Sigmoid colon (tissue), 7 donors: ENCODE measurements at regions of chr5 and their contacts with region 1.

Region 1: DNA sequence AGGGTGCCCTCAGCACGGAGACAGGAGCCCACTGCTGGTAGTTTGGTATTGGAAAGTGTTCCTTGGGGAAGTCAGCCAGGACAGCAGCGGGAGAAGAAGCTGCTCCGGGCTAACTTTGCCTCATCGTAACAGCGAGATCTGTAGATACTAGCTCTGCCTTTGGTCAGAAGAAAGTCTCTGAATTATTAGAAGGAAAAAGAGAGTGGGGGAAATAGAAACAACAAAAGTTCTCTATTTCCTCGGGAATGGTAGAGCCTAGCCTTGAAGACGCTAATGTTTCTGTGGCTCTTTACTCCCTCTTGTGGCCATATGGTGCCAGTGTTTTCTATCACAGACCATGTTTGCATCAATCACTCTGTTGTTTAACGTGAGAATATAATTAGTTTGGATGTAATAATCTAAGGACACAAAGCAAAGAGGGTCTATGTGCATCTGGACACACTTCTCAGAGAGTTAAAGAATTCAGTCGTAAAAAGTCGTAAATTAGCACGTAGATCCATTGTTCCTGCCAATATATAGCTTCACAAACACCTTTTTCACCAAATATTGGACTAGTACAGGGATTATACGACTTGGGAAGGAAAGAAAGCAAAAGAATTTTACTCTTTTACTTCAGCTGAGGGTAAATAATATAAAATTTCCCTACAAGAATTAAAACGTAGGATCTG is 40.2 kb upstream of the HSD17B4 start:
- DNase-seq: peak; percentile 69
- H3K4me3 ChIP-seq: peak overlapping the region; percentile 15 to 51 (median 42)
- H3K27ac ChIP-seq: peak overlapping the region; percentile 61 to 71 (median 66)
- H3K4me1 ChIP-seq: peaks cover 0 to 13% (median 7%) of the 10 kb centered on the region in 4 donors
- H3K27me3 ChIP-seq: peaks cover 0 to 12% (median 0%) of the 10 kb centered on the region in 3 donors
- CTCF ChIP-seq: peak; percentile 87 to 94 (median 92)
- EP300 ChIP-seq: no peak
- POLR2A ChIP-seq: no peak

Region 2: GRCh38 chr5:118987988-118988865 is 423.8 kb before region 1 on chr5 and contains the start of gene DTWD2:
- intact Hi-C with region 1: loop called (anchors 1 kb)
- DNase-seq: peak; percentile 93
- H3K4me3 ChIP-seq: peak within 1 kb of the TSS; percentile 59 to 76 (median 66)
- H3K27ac ChIP-seq: peak within 1 kb of the TSS; percentile 86 to 95 (median 90)
- H3K4me1 ChIP-seq: peaks cover 0 to 16% (median 12%) of the 10 kb centered on the region in 4 donors
- H3K27me3 ChIP-seq: no peaks in the 10 kb centered on the region
- CTCF ChIP-seq: peak; percentile 74 to 94 (median 80)
- EP300 ChIP-seq: no peak
- POLR2A ChIP-seq: no peak
- total RNA-seq, gene DTWD2: 4.6 to 10.4 (median 7.9) TPM

Region 3: GRCh38 chr5:119070828-119071572 is 341.1 kb before region 1 on chr5 and contains the start of gene DMXL1:
- intact Hi-C with region 1: loop called (anchors 5 kb)
- DNase-seq: peak; percentile 100
- H3K4me3 ChIP-seq: peak within 1 kb of the TSS; percentile 83 to 95 (median 88)
- H3K27ac ChIP-seq: peak within 1 kb of the TSS; percentile 94 to 99 (median 97)
- H3K4me1 ChIP-seq: peaks cover 0 to 40% (median 21%) of the 10 kb centered on the region in 4 donors
- H3K27me3 ChIP-seq: no peaks in the 10 kb centered on the region
- CTCF ChIP-seq: no peak
- EP300 ChIP-seq: peak in 1 of 4 donors; percentile 47
- POLR2A ChIP-seq: peak; percentile 57 to 79
- total RNA-seq, gene DMXL1: 50.8 to 106 (median 66.9) TPM

Region 4: GRCh38 chr5:119238265-119239118 is 173.6 kb before region 1 on chr5:
- intact Hi-C with region 1: loop called (anchors 10 kb)
- DNase-seq: no peak
- H3K4me3 ChIP-seq: no peak overlapping the region
- H3K27ac ChIP-seq: no peak overlapping the region
- H3K4me1 ChIP-seq: no peaks in the 10 kb centered on the region
- H3K27me3 ChIP-seq: no peaks in the 10 kb centered on the region
- CTCF ChIP-seq: no peak
- EP300 ChIP-seq: no peak
- POLR2A ChIP-seq: no peak

Region 5: DNA sequence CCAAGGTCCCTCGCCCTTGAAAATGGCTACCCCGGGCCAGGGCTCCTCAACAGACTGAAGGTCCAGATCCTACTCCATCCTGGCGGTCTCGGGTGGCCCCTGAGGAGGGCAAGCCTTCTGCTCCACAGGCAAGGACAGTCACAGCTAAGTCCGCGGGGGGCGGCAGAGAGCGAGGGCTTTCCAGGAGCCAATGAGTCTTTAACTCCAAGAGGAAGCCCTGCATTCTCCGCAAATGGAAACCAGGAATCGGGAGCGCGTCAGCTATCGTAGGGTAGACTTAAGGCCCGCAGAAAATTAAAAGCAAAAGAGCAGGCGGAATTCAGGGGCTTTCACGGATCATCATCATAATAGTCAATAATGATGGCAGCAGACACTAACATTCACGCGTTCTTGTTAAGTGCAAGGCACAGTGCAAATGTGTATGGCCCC is 144.1 kb before region 1 on chr5:
- intact Hi-C with region 1: loop called (anchors 5 kb)
- DNase-seq: peak; percentile 97
- H3K4me3 ChIP-seq: peak overlapping the region; percentile 50 to 84 (median 78)
- H3K27ac ChIP-seq: peak overlapping the region; percentile 89 to 96 (median 92)
- H3K4me1 ChIP-seq: peaks cover 0 to 28% (median 15%) of the 10 kb centered on the region in 4 donors
- H3K27me3 ChIP-seq: no peaks in the 10 kb centered on the region
- CTCF ChIP-seq: peak in 3 of 4 experiments; percentile 15 to 31 (median 29)
- EP300 ChIP-seq: no peak
- POLR2A ChIP-seq: no peak

Region 6: DNA sequence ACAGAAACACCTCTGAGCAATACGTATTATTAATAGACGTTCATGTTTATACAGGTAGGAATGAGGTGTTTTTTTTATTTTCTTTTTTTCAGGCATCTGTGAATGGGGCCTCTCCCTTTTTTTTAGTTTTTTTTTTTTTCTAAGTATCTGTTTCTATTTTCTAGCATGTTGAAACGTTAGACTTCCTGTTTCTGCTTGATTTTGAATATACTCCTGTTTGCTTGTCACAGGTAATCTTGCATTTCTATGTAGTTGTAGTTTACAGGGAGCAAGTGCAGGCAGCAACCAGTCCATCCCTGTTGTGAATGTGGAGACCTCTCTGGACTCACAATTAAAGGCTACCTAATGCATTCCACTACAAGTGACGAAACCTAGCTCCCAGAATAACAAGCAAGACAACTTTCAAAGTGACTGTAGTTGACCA is 79.1 kb before region 1 on chr5:
- intact Hi-C with region 1: loop called (anchors 5 kb)
- DNase-seq: no peak
- H3K4me3 ChIP-seq: no peak overlapping the region
- H3K27ac ChIP-seq: no peak overlapping the region
- H3K4me1 ChIP-seq: peaks cover 0 to 56% (median 44%) of the 10 kb centered on the region in 4 donors
- H3K27me3 ChIP-seq: no peaks in the 10 kb centered on the region
- CTCF ChIP-seq: no peak
- EP300 ChIP-seq: no peak
- POLR2A ChIP-seq: no peak

Region 7: GRCh38 chr5:119395080-119395836 is 16.8 kb before region 1 on chr5:
- intact Hi-C with region 1: no loop called
- DNase-seq: no peak
- H3K4me3 ChIP-seq: no peak overlapping the region
- H3K27ac ChIP-seq: no peak overlapping the region
- H3K4me1 ChIP-seq: peaks cover 0 to 16% (median 8%) of the 10 kb centered on the region in 4 donors
- H3K27me3 ChIP-seq: no peaks in the 10 kb centered on the region
- CTCF ChIP-seq: no peak
- EP300 ChIP-seq: no peak
- POLR2A ChIP-seq: no peak

Region 8: DNA sequence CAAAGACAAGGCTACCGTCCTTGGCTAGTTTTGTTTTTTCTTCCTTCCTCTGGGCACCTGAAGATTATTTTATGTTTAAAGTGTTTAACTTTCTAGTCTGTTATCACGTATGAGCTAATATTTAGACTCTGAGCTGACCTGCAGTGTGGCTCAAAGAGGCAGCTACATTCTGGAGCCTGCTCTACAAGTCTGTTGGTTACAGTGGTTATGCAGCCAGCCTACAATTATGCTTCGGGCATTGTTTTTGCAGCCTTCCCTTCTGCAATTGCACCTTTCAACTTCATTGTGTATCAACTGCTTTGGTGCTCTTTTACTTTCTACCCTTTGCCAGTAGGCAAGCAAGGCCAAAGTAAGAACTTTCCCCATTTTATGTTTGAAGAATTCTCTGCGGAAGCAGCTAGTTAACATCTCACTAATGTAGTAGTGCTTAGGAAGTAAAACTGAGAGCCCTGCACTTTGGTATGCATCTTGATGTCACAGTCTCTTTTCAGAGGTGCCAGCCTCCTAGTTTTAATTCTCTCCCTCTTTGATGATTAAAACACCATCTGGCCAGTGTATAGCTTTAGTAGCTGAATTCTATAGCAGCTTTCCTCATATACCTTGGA is 539.4 kb after region 1 on chr5:
- intact Hi-C with region 1: no loop called
- DNase-seq: no peak
- H3K4me3 ChIP-seq: no peak overlapping the region
- H3K27ac ChIP-seq: no peak overlapping the region
- H3K4me1 ChIP-seq: no peaks in the 10 kb centered on the region
- H3K27me3 ChIP-seq: no peaks in the 10 kb centered on the region
- CTCF ChIP-seq: no peak
- EP300 ChIP-seq: no peak
- POLR2A ChIP-seq: no peak

Region 9: GRCh38 chr5:120073722-120074121 is 661.7 kb after region 1 on chr5:
- intact Hi-C with region 1: no loop called
- DNase-seq: no peak
- H3K4me3 ChIP-seq: no peak overlapping the region
- H3K27ac ChIP-seq: no peak overlapping the region
- H3K4me1 ChIP-seq: no peaks in the 10 kb centered on the region
- H3K27me3 ChIP-seq: no peaks in the 10 kb centered on the region
- CTCF ChIP-seq: no peak
- EP300 ChIP-seq: no peak
- POLR2A ChIP-seq: no peak